HEK293 (cell line): ENCODE measurements at regions of chr2 and their contacts with region 1.

Region 1: GRCh38 chr2:101188683-101189405 is 37.7 kb upstream of the TBC1D8 start:
- H3K4me3 ChIP-seq: no peak overlapping the region
- H3K27ac ChIP-seq: no peak overlapping the region
- H3K4me1 ChIP-seq: no peaks in the 10 kb centered on the region
- CTCF ChIP-seq: no peak

Region 2: GRCh38 chr2:101012706-101013181 is 176.1 kb before region 1 on chr2:
- CTCF ChIA-PET with region 1: interaction called, 23 read pairs
- POLR2A ChIA-PET with region 1: no interaction called
- H3K4me3 ChIP-seq: no peak overlapping the region
- H3K27ac ChIP-seq: no peak overlapping the region
- H3K4me1 ChIP-seq: no peaks in the 10 kb centered on the region
- CTCF ChIP-seq: peak; percentile 65

Region 3: GRCh38 chr2:101030863-101031554 is 157.8 kb before region 1 on chr2:
- CTCF ChIA-PET with region 1: interaction called, 19 read pairs
- POLR2A ChIA-PET with region 1: no interaction called
- H3K4me3 ChIP-seq: no peak overlapping the region
- H3K27ac ChIP-seq: no peak overlapping the region
- H3K4me1 ChIP-seq: no peaks in the 10 kb centered on the region
- CTCF ChIP-seq: no peak

Region 4: DNA sequence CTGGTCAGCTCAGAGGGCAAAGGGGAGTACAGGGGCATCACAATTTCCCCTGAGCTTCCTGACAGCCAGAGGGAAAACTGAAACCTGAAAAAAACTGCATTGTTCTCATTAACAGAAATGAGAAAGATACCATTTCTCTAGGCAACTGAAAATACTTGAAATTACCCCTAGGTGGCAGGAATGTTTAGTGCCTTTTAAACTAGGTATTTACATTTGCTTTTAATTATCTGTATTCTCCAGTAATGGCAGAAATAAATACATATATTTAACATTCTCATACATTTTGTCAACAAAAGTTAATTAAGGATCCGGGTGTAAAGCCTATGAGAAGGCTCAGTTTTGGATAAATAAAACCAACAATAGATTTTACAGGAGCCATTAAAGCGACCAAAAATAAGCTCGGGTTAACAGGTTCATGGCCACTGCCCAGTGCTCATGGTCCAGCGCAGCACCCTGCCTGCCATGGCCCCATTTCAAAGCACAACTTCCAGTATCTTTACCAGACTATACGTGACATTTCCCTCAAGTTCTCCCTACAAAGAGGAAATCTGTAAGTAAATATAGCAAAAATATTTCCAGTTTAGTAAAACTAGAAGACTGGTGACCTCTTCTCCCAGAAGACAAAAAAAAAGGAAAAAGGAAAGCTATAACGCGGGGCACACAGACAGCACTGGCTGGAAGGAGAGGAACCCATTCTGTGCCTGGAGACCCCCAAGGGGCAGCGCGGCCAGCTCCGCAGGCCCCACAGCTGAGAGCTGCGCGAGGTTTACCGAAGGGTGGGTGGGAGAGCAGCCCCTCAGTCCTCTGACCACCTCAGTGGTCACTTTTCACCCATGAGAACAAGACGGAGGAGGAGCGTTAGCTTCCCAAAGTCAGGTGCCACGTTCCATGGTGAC is 152.0 kb before region 1 on chr2:
- CTCF ChIA-PET with region 1: interaction called, 19 read pairs
- POLR2A ChIA-PET with region 1: no interaction called
- H3K4me3 ChIP-seq: no peak overlapping the region
- H3K27ac ChIP-seq: no peak overlapping the region
- H3K4me1 ChIP-seq: no peaks in the 10 kb centered on the region
- CTCF ChIP-seq: no peak

Region 5: DNA sequence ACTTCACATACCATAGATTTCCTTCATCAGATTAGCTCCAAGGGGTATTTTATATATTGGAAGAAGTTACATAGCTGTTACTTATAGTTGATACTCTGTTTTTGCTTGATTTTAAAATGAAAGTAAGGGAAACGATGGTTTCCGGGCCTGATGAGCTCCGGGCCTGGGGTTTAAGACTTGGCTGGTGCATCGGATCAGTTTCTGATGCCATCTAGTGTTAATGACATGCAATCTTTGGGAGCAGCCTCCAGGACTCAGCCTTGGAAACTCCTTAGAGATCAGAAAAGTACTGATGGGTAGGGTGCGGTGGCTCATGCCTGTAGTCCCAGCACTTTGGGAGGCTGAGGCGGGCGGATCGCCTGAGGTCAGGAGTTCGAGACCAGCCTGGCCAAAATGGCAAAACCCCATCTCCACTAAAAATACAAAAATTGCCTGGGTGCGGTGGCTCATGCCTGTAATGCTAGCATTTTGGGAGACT is 16.7 kb after region 1 on chr2:
- CTCF ChIA-PET with region 1: interaction called, 40 read pairs
- POLR2A ChIA-PET with region 1: no interaction called
- H3K4me3 ChIP-seq: no peak overlapping the region; the same call in 1 of the 2 replicates
- H3K27ac ChIP-seq: no peak overlapping the region
- H3K4me1 ChIP-seq: no peaks in the 10 kb centered on the region
- CTCF ChIP-seq: peak; percentile 30; the same call in 1 of the 2 replicates

Region 6: GRCh38 chr2:101349893-101350662 is 161.2 kb after region 1 on chr2:
- CTCF ChIA-PET with region 1: no interaction called
- POLR2A ChIA-PET with region 1: no interaction called
- H3K4me3 ChIP-seq: no peak overlapping the region
- H3K27ac ChIP-seq: no peak overlapping the region
- H3K4me1 ChIP-seq: no peaks in the 10 kb centered on the region
- CTCF ChIP-seq: no peak